Calu3 (cell line): ENCODE measurements at regions of chr14 and their contacts with region 1.

Region 1: GRCh38 chr14:87944987-87945604 is 47.9 kb downstream of the GALC start:
- DNase-seq: peak; percentile 4
- H3K4me3 Mint-ChIP-seq: no peak overlapping the region
- H3K27ac Mint-ChIP-seq: no peak overlapping the region
- H3K4me1 Mint-ChIP-seq: no peaks in the 10 kb centered on the region
- H3K27me3 Mint-ChIP-seq: no peaks in the 10 kb centered on the region
- CTCF ChIP-seq: no peak

Region 2: DNA sequence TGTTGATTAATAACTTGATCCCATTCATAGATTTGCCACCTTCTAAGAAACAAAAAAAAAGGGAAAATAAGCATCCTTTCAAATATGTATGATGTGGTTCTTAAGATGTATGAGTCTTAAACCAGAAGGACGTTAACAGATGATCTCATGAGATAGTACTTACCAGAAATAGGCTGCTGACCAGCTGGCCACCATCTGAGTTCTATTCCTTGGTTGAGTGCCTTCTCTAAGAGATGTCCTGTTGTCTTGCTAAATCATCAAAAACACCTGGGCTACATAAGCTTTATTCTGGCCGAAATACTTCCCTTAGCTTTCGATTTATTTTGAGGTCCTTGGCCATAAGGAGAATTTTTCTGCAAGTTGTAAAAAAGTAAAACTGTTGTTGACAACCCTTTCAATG is 115.5 kb after region 1 on chr14:
- CTCF ChIA-PET with region 1: no interaction called
- intact Hi-C with region 1: no loop called
- DNase-seq: no peak
- H3K4me3 Mint-ChIP-seq: no peak overlapping the region
- H3K27ac Mint-ChIP-seq: no peak overlapping the region
- H3K4me1 Mint-ChIP-seq: no peaks in the 10 kb centered on the region
- H3K27me3 Mint-ChIP-seq: no peaks in the 10 kb centered on the region
- CTCF ChIP-seq: no peak

Region 3: DNA sequence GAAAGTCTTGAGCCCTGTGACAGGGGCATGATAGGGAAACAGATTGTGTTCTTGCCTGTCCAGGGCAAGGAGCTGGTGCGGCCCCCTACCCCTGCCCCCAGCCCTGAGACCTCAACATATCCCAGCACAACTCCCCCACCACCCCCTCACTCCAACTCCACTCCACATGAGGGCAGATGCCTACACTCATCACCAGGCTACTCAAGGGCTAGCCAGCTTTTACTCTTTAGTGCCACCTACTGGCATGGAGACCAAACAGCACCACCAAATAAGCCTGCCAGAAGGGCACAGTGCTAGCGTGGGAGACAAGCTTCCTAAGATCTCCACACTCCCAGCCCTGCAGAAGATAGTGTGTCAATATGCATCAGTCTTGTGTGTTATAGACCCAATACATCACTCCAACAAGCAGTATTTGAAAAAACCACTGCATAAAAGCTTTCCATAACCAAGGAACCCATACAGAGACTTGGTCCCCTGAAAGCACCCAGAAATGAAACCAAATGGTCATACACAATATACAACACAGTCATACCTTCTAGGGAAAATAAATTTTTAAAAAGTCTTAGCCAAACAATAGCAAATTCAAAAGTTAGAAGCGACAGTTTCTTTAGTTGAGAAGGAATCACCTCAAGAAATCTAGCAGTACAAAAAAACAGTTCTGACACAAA is 223.5 kb after region 1 on chr14:
- CTCF ChIA-PET with region 1: interaction called, 4 read pairs
- intact Hi-C with region 1: loop called (anchors 2 kb)
- DNase-seq: peak; percentile 35
- H3K4me3 Mint-ChIP-seq: no peak overlapping the region
- H3K27ac Mint-ChIP-seq: no peak overlapping the region
- H3K4me1 Mint-ChIP-seq: peaks cover 25% of the 10 kb centered on the region
- H3K27me3 Mint-ChIP-seq: peaks cover 8% of the 10 kb centered on the region
- CTCF ChIP-seq: peak; percentile 39

Region 4: DNA sequence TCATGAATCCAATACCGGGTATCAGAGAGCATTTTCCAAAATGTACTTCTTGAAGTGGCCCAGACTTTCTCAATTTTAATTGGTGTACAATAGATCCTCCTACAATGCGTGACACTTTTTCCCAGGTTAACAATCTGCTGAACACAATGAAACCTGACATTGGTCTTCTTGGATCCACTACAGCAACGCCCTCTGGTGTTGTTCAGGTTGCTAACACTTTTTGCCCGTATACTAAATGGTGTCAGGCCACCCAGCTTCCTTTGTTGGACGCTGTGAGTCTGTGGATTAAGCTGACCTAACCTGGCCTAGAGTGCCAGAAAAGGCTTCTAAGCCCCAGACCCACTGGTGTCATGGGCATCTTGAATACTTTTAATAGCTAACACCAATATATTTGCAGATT is 288.8 kb after region 1 on chr14:
- CTCF ChIA-PET with region 1: no interaction called
- intact Hi-C with region 1: loop called (anchors 5 kb)
- DNase-seq: peak; percentile 24
- H3K4me3 Mint-ChIP-seq: no peak overlapping the region
- H3K27ac Mint-ChIP-seq: no peak overlapping the region
- H3K4me1 Mint-ChIP-seq: no peaks in the 10 kb centered on the region
- H3K27me3 Mint-ChIP-seq: peaks cover 10% of the 10 kb centered on the region
- CTCF ChIP-seq: peak; percentile 17

Region 5: DNA sequence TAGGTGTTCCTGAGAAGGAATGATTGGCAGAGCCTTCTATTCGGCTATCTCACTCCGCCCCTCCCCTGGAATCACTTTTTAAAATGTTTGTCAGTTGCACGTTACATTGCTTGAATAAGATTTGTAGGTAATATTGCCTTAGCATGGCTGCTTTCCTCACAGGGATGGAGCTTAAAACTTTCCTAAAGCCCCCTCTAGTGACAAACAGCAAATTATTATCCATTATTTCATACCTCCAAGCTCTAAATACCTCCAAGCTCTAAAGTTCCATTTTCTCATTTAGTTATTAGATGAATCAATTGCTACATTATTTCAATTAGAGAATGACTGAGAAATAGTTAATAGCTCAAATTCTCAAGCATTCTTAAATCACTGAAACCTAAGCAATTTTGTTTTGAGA is 435.3 kb after region 1 on chr14:
- CTCF ChIA-PET with region 1: interaction called, 4 read pairs
- intact Hi-C with region 1: loop called (anchors 2 kb)
- DNase-seq: no peak
- H3K4me3 Mint-ChIP-seq: no peak overlapping the region
- H3K27ac Mint-ChIP-seq: no peak overlapping the region
- H3K4me1 Mint-ChIP-seq: no peaks in the 10 kb centered on the region
- H3K27me3 Mint-ChIP-seq: no peaks in the 10 kb centered on the region
- CTCF ChIP-seq: no peak